Calu3 (cell line): ENCODE measurements at regions of chr5 and their contacts with region 1.

Region 1: DNA sequence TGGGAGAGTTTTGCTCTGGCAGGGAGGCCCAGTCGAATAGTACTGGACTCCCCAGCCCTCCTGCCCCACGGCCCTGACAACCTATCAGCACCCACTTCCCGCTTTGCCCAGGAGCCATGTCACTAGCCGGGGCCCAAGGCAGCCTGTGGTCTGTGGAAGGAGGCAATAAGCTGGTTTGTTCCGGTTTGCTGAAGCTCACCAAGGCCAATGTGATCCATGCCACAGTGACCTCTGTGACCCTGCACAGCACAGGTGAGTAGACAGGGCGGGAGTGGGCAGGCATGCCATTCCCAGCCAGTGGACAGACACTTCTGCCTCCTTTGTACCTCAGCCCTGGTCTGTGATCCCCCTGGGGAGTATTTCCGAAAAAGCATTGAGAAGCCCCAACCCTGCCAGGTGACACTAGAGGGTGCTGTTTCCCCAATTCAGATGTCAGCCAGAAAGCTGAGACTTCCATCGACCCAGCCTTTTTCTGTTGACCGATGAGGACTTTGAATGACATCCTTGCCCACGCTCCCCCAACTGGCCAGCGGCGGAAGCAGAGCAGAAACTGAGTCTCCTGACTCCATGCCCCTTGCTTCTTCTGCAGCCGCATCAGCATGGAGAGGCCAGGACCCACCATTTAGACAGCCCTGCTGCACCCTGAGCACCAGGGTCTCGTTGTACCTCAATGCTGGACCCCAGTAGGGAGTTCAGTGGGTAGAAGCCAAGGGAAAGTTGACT is 9.6 kb downstream of the PCYOX1L start:
- DNase-seq: peak; percentile 89
- H3K4me3 Mint-ChIP-seq: no peak overlapping the region
- H3K27ac Mint-ChIP-seq: no peak overlapping the region
- H3K4me1 Mint-ChIP-seq: peaks cover 8% of the 10 kb centered on the region
- H3K27me3 Mint-ChIP-seq: no peaks in the 10 kb centered on the region
- CTCF ChIP-seq: peak; percentile 90

Region 2: GRCh38 chr5:149317281-149318048 is 49.9 kb before region 1 on chr5:
- CTCF ChIA-PET with region 1: interaction called, 11 read pairs
- intact Hi-C with region 1: loop called (anchors 1 kb)
- DNase-seq: peak; percentile 44
- H3K4me3 Mint-ChIP-seq: no peak overlapping the region
- H3K27ac Mint-ChIP-seq: no peak overlapping the region
- H3K4me1 Mint-ChIP-seq: peaks cover 15% of the 10 kb centered on the region
- H3K27me3 Mint-ChIP-seq: no peaks in the 10 kb centered on the region
- CTCF ChIP-seq: peak; percentile 65

Region 3: GRCh38 chr5:149517461-149518122 is 150.2 kb after region 1 on chr5:
- CTCF ChIA-PET with region 1: no interaction called
- intact Hi-C with region 1: no loop called
- DNase-seq: no peak
- H3K4me3 Mint-ChIP-seq: no peak overlapping the region
- H3K27ac Mint-ChIP-seq: no peak overlapping the region
- H3K4me1 Mint-ChIP-seq: peaks cover 72% of the 10 kb centered on the region
- H3K27me3 Mint-ChIP-seq: no peaks in the 10 kb centered on the region
- CTCF ChIP-seq: no peak